Activated CD8-positive, alpha-beta T cell treated with anti-CD3 and anti-CD28 coated beads, Interleukin-2, amount 10 ng/mL, durations not matched to agents 7 days and 5 days (primary cell): ENCODE measurements at regions of chr3 and their contacts with region 1.

Region 1: DNA sequence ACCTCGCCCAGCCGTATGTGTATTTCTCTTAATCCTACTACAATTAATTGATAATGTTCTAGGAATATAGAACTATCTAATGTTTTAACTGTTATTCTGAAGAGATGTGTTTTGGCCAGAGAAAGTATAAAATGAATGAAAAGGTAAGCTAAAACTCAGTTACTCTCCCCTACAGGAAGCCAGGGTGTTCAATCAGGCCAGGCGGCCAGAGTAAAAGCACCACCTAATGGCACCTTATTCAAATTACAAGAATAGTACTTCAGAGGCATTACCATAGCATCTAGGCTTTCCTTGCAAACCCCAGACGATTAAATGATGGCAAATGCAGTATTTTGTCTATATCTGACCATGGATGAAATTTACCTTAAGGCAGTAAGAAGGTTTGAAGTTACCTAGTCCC is 10.4 kb downstream of the SLC12A8 start:
- DNase-seq: peak; percentile 48
- ATAC-seq: peak; percentile 58
- H3K4me3 Mint-ChIP-seq: no peak overlapping the region
- H3K27ac Mint-ChIP-seq: no peak overlapping the region
- H3K4me1 Mint-ChIP-seq: peaks cover 8% of the 10 kb centered on the region
- H3K27me3 Mint-ChIP-seq: peaks cover 19% of the 10 kb centered on the region

Region 2: DNA sequence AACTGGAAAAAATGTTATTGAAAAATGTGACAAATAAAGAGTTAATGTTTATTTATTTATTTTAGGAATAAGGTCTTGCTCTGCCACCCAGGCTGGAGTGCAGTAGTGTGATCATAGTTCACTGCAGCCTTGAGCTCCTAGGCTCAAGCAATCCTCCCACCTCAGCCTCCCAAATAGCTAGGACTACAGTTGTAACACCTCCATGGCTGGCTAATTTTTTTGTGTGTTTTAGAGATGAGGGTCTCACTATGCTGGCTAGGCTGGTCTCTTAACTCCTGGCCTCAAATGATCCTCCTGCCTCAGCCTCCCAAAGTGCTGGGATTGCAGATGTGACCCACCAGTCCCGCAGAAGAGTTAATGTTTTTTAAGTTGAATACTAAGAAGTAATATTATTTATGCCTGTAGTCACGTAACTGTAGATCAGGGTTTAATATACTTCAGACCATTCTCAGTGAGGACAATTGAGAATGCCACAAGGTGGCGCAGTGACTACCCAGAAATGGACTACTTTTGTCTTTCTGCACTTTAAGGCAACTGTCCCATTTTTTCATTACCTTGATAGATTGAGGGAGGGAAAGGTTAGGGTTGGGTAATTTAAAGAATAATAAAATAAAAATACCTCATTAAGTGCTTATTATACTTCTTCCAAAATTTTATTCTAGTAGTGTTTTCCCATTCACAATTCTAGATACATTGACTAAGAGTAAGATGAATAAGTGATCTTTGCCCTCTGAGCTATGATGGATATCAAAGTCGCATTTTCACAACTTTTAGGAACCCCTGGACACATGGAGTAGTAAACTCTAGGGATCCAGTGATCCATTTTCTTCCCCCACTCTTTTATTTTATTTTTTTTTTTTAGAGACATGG is 273.6 kb before region 1 on chr3:
- CTCF ChIA-PET with region 1: interaction called, 13 read pairs
- POLR2A ChIA-PET with region 1: no interaction called
- DNase-seq: peak; percentile 78
- ATAC-seq: peak; percentile 77
- H3K4me3 Mint-ChIP-seq: no peak overlapping the region
- H3K27ac Mint-ChIP-seq: no peak overlapping the region
- H3K4me1 Mint-ChIP-seq: peaks cover 14% of the 10 kb centered on the region
- H3K27me3 Mint-ChIP-seq: peaks cover 45% of the 10 kb centered on the region

Region 3: GRCh38 chr3:124995460-124995994 is 206.7 kb before region 1 on chr3:
- CTCF ChIA-PET with region 1: interaction called, 21 read pairs
- POLR2A ChIA-PET with region 1: no interaction called
- DNase-seq: peak; percentile 70
- ATAC-seq: peak; percentile 87
- H3K4me3 Mint-ChIP-seq: no peak overlapping the region
- H3K27ac Mint-ChIP-seq: peak overlapping the region; percentile 54
- H3K4me1 Mint-ChIP-seq: peaks cover 20% of the 10 kb centered on the region
- H3K27me3 Mint-ChIP-seq: no peaks in the 10 kb centered on the region

Region 4: DNA sequence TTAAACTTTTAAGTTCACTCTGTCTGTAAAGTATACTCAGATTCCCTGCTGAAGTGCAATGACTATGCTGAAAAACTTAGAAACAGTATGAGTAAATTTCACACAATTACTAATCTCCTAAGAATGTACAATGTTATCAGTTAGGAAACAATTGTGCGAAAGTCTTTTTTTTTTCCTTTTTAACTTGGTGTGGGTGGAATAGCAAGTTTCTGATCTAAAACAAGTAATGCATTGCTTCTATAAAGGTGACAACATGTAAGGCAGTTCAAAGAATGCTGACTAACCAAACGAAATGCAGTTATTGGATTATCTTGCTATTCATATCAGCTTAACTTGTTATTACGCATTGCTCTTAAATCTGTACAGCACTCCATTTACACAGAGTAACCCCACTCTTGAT is 29.7 kb after region 1 on chr3:
- CTCF ChIA-PET with region 1: no interaction called
- POLR2A ChIA-PET with region 1: no interaction called
- DNase-seq: no peak
- ATAC-seq: no peak
- H3K4me3 Mint-ChIP-seq: no peak overlapping the region
- H3K27ac Mint-ChIP-seq: no peak overlapping the region
- H3K4me1 Mint-ChIP-seq: no peaks in the 10 kb centered on the region
- H3K27me3 Mint-ChIP-seq: no peaks in the 10 kb centered on the region

Region 5: DNA sequence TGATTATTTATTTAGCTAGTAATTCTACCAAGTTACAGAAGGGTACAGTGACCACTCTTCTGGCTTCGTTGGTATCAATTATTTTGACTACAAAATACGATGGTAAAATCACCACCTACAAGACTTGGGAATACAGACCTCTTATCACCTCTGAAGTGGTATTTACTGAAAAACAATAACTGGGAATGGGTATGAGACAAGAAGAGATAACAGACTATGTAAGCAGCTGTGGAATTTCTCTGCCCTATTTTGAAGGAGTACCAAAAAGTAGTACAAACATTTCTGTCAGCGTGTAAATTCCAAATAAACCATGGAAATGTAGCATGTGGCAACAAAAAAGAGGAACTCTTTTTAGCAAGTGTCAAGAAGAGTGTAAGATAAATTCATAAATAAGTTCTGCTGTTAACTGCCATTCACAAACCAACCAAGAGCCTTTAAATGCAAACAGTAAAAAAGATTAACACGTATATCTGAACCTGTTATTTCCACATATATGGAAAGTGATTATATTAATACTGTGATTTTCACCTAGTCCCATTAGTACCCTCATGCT is 87.3 kb after region 1 on chr3:
- CTCF ChIA-PET with region 1: no interaction called
- POLR2A ChIA-PET with region 1: no interaction called
- DNase-seq: no peak
- ATAC-seq: no peak
- H3K4me3 Mint-ChIP-seq: no peak overlapping the region
- H3K27ac Mint-ChIP-seq: no peak overlapping the region
- H3K4me1 Mint-ChIP-seq: no peaks in the 10 kb centered on the region
- H3K27me3 Mint-ChIP-seq: no peaks in the 10 kb centered on the region